ENCODE measurements at regions of chr1 and their contacts with region 1.

Region 1: DNA sequence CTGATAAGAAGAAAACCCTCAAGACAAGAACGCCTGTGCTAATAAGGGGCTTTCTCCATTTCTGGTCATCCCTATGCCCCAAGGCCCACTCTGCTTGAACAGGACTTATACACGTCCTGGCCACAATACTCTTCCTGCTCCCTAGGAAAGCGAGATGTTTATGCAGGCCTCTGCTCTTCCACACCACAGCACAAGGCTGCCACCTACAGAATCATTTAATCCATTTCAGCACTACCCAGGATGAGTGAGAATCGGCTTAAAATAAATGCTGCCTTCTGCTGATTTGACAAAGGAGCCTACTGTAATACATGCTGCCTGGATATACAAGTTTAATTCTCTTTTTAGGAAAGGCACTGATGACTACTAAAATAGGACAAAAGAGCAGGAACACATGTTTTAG is 29.4 kb downstream of the FRRS1 start:
- DNase-seq: peak in 1 of 2 donors; percentile 46
- ATAC-seq: peak; percentile 55 to 96 (median 94)
- H3K4me3 ChIP-seq: no peak overlapping the region
- H3K27ac ChIP-seq: peak overlapping the region in 2 of 10 donors; percentile 11 to 42
- H3K4me1 ChIP-seq: peaks cover 0 to 8% (median 0%) of the 10 kb centered on the region in 9 donors
- H3K27me3 ChIP-seq: no peaks in the 10 kb centered on the region
- CTCF ChIP-seq: peak; percentile 37 to 74 (median 52)

Region 2: GRCh38 chr1:98794196-98794886 is 942.7 kb before region 1 on chr1:
- intact Hi-C with region 1: loop called in 2 of 10 experiments (anchors 5 to 10 kb)
- DNase-seq: peak in 1 of 2 donors; percentile 30
- ATAC-seq: peak in 7 of 8 donors; percentile 43 to 70 (median 65)
- H3K4me3 ChIP-seq: no peak overlapping the region
- H3K27ac ChIP-seq: no peak overlapping the region
- H3K4me1 ChIP-seq: no peaks in the 10 kb centered on the region
- H3K27me3 ChIP-seq: no peaks in the 10 kb centered on the region
- CTCF ChIP-seq: peak; percentile 34 to 77 (median 70)

Region 3: GRCh38 chr1:100265931-100266740 is 529.1 kb after region 1 on chr1 and contains the start of gene RTCA:
- intact Hi-C with region 1: no loop called
- DNase-seq: peak; percentile 96 to 98
- ATAC-seq: peak; percentile 99 to 100 (median 100)
- H3K4me3 ChIP-seq: peak within 1 kb of the TSS; percentile 59 to 99 (median 96)
- H3K27ac ChIP-seq: peak within 1 kb of the TSS in 9 of 10 donors; percentile 79 to 97 (median 88)
- H3K4me1 ChIP-seq: peaks cover 4 to 42% (median 35%) of the 10 kb centered on the region in 9 donors
- H3K27me3 ChIP-seq: no peaks in the 10 kb centered on the region
- CTCF ChIP-seq: no peak
- total RNA-seq, gene RTCA: 30.1 to 44.8 (median 36.9) TPM